ENCODE measurements at regions of chr16 and their contacts with region 1.

Region 1: DNA sequence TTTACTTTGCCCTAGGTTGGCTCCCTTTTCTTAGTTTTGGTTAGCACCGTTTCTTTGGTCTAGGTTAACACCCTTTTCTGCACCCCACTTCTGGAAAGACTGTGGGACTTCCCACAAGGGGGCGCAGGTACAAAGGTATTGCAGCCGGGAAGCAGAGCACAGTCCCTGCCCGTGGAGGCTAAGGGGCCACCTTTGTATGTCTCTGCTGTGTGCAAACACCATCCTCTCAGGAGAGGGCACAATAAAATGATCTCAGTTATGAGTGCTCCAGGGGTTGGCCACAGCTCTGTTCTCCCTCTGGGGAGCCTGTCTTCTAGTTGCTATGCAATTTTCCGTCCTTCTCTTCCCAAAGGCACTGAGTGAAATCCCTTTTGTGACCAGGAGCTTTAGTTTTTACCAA is 28.4 kb upstream of the TMC5 start:
- DNase-seq: peak; percentile 73
- H3K4me3 Mint-ChIP-seq: no peak overlapping the region
- H3K27ac Mint-ChIP-seq: no peak overlapping the region
- H3K4me1 Mint-ChIP-seq: peaks cover 20% of the 10 kb centered on the region
- H3K27me3 Mint-ChIP-seq: no peaks in the 10 kb centered on the region
- CTCF ChIP-seq: peak; percentile 51

Region 2: GRCh38 chr16:18789850-18790724 is 599.2 kb before region 1 on chr16 and contains the start of gene RPS15A:
- CTCF ChIA-PET with region 1: no interaction called
- POLR2A ChIA-PET with region 1: no interaction called
- intact Hi-C with region 1: no loop called
- DNase-seq: peak; percentile 98
- H3K4me3 Mint-ChIP-seq: peak within 1 kb of the TSS; percentile 95
- H3K27ac Mint-ChIP-seq: peak within 1 kb of the TSS; percentile 87
- H3K4me1 Mint-ChIP-seq: peaks cover 28% of the 10 kb centered on the region
- H3K27me3 Mint-ChIP-seq: no peaks in the 10 kb centered on the region
- CTCF ChIP-seq: no peak
- total RNA-seq, gene RPS15A: 869 and 1,431 TPM in 2 replicates

Region 3: GRCh38 chr16:19299565-19299964 is 89.7 kb before region 1 on chr16:
- CTCF ChIA-PET with region 1: no interaction called
- POLR2A ChIA-PET with region 1: no interaction called
- intact Hi-C with region 1: no loop called
- DNase-seq: no peak
- H3K4me3 Mint-ChIP-seq: no peak overlapping the region
- H3K27ac Mint-ChIP-seq: no peak overlapping the region
- H3K4me1 Mint-ChIP-seq: no peaks in the 10 kb centered on the region
- H3K27me3 Mint-ChIP-seq: peaks cover 51% of the 10 kb centered on the region
- CTCF ChIP-seq: no peak

Region 4: DNA sequence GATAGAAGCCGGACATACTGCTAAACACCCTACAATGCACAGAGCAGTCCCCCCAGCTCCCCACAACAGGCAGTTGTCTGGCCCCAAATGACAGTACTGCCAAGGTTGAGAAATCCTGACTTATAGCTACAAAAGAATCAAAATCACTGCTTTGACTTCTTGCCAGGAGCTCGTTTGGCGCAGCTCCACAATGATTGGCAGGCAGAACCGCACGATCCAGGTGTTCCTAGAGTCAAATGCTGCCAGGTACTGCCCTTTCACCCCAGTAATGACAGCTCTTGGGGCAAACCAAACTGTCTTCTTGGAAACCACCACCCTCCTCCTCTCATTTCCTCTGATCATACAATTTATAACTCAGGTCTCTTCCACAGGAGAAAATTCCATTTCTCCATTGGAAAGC is 26.2 kb after region 1 on chr16:
- CTCF ChIA-PET with region 1: interaction called, 10 read pairs
- POLR2A ChIA-PET with region 1: interaction called, 11 read pairs
- intact Hi-C with region 1: no loop called
- DNase-seq: peak; percentile 80
- H3K4me3 Mint-ChIP-seq: no peak overlapping the region
- H3K27ac Mint-ChIP-seq: peak overlapping the region; percentile 54
- H3K4me1 Mint-ChIP-seq: peaks cover 30% of the 10 kb centered on the region
- H3K27me3 Mint-ChIP-seq: no peaks in the 10 kb centered on the region
- CTCF ChIP-seq: no peak

Measured in MCF 10A (cell line).